Activated naive CD4-positive, alpha-beta T cell treated with anti-CD3 and anti-CD28 coated beads for 36 hours (primary cell): ENCODE measurements at regions of chr7 and their contacts with region 1.

Region 1: GRCh38 chr7:105849122-105849855 is 27.1 kb downstream of the ATXN7L1 start:
- DNase-seq: peak; percentile 83
- H3K4me3 Mint-ChIP-seq: no peak overlapping the region
- H3K27ac Mint-ChIP-seq: no peak overlapping the region
- H3K4me1 Mint-ChIP-seq: peaks cover 44% of the 10 kb centered on the region
- H3K27me3 Mint-ChIP-seq: no peaks in the 10 kb centered on the region

Region 2: DNA sequence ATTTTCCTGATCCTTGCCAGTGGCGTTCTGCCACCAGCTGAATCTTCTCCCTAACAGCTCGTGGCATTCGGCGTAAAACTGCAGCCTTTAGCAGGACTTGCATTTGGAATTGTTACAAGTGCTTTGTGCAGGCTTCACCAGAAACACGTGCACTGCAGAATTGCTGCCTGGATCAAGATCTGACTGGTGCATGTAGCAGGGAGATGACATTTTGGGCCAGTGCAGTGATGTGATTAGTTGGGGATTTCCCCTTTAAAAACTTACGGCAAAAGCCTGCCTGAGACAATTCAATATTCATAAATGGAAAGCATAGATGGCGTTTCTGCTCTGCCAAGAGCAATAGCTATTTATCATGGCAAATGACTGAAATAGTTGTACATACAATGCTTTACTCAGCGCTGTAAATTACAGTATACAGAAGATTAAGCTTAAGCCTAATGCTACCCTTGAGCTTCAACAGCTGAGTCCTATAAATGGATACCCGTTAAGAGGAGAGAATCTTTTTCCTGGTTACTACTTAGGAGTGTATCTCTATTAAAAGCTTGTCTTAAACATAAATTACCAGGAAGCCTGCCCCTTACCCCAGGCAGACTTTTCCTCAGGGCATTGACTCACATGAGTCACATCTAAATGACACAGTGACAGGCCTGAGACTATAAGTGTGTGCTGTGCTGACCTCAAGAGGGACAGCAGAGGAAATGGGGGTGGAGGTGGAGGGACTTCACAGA is 79.2 kb before region 1 on chr7:
- CTCF ChIA-PET with region 1: interaction called, 3 read pairs
- intact Hi-C with region 1: loop called (anchors 1 kb)
- DNase-seq: peak; percentile 39
- H3K4me3 Mint-ChIP-seq: no peak overlapping the region
- H3K27ac Mint-ChIP-seq: no peak overlapping the region
- H3K4me1 Mint-ChIP-seq: peaks cover 26% of the 10 kb centered on the region
- H3K27me3 Mint-ChIP-seq: no peaks in the 10 kb centered on the region